ENCODE measurements at regions of chr6 and their contacts with region 1.

Region 1: GRCh38 chr6:51855310-51856082 is 231.9 kb downstream of the PKHD1 start:
- DNase-seq: peak; percentile 64
- CTCF ChIP-seq: peak; percentile 61

Region 2: GRCh38 chr6:51792273-51793030 is 63.0 kb before region 1 on chr6:
- CTCF ChIA-PET with region 1: no interaction called
- POLR2A ChIA-PET with region 1: no interaction called
- DNase-seq: no peak
- CTCF ChIP-seq: no peak

Region 3: GRCh38 chr6:51814418-51814817 is 41.1 kb before region 1 on chr6:
- CTCF ChIA-PET with region 1: no interaction called
- POLR2A ChIA-PET with region 1: no interaction called
- DNase-seq: no peak
- CTCF ChIP-seq: no peak

Region 4: DNA sequence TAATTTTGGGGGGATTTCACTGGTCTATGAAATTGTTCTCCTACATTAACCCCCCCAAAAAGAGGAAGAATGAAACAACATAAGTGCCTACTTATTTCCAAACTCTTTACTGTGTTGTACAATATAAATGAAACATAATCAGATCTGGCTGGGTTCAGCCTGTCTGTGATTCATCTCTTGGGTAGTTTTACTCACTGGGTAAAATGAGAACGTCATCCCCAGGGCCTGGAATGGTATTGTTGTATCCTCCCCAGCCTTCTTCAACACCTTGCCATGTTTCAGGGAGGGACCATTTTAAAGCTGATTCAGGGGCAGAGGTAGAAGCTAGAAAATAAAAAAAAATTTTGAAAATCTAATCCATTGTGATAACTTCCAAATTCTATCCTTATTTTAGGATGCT is 24.8 kb before region 1 on chr6:
- CTCF ChIA-PET with region 1: no interaction called
- POLR2A ChIA-PET with region 1: no interaction called
- DNase-seq: no peak
- CTCF ChIP-seq: no peak

Region 5: DNA sequence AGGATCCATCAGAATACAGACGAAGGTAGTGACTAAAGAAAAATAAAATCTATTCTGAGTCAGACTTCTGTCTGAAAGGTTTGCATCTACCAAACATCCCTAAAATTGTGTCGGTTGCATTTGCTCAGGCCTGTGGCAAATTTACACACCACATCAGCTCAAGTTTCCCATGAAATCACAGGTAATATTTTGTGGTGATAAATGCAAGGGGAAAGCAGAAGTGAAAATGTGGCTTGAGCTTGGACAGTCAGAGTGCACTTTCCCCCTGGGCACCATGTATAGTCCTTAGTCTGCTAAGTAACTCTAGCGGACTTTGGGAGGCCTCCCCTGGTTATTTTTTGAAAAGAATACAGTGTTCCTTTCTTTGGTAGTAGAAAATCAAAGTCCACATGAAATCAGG is 72.8 kb after region 1 on chr6:
- CTCF ChIA-PET with region 1: interaction called, 19 read pairs
- POLR2A ChIA-PET with region 1: no interaction called
- DNase-seq: peak; percentile 16
- CTCF ChIP-seq: no peak

Region 6: GRCh38 chr6:52020945-52021570 is 165.6 kb after region 1 on chr6:
- CTCF ChIA-PET with region 1: interaction called, 23 read pairs
- POLR2A ChIA-PET with region 1: no interaction called
- DNase-seq: no peak
- CTCF ChIP-seq: peak; percentile 59

Measured in GM10248 (cell line).